ENCODE measurements at regions of chr11 and their contacts with region 1.

Region 1: GRCh38 chr11:72179804-72180396 is 12.0 kb upstream of the FOLR1 start:
- DNase-seq: no peak
- H3K4me3 Mint-ChIP-seq: no peak overlapping the region
- H3K27ac Mint-ChIP-seq: peak overlapping the region; percentile 74
- H3K4me1 Mint-ChIP-seq: peaks cover 17% of the 10 kb centered on the region
- H3K27me3 Mint-ChIP-seq: peaks cover 9% of the 10 kb centered on the region

Region 2: DNA sequence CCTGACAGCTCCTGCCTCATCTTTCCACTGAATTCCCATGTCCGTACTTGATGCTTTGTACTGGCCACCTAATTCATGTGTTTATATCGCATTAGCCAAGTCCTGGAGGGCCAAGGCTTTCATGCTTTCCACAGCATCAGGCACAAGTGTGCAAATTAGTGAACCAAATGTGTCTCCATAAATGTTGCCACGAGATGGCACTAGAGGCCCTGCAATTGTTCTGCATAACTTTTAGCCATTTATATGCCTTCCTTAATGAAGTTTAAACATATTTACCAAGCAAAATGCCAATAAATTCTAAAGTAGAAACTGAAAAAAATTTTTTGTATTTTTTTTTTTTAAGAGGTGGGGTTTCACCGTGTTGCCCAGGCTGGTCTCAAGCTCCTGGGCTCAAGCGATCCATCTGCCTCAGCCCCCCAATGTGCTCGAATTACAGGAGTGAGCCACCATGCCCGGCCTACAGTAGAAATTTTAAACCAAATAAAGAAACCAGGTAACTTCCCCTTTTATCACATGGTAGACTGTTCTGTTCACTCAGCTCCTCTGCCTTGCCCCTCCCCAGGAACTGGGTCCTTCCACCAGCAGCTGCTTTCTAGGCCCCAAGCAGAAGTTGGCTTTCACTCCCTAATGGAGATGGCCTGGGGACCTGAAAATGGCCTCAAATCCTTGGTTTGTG is 202.0 kb before region 1 on chr11:
- intact Hi-C with region 1: loop called (anchors 5 kb)
- DNase-seq: peak; percentile 39
- H3K4me3 Mint-ChIP-seq: no peak overlapping the region
- H3K27ac Mint-ChIP-seq: no peak overlapping the region
- H3K4me1 Mint-ChIP-seq: peaks cover 2% of the 10 kb centered on the region
- H3K27me3 Mint-ChIP-seq: no peaks in the 10 kb centered on the region

Region 3: GRCh38 chr11:72030472-72031045 is 149.3 kb before region 1 on chr11:
- intact Hi-C with region 1: loop called (anchors 1 kb)
- DNase-seq: no peak
- H3K4me3 Mint-ChIP-seq: no peak overlapping the region
- H3K27ac Mint-ChIP-seq: no peak overlapping the region
- H3K4me1 Mint-ChIP-seq: peaks cover 10% of the 10 kb centered on the region
- H3K27me3 Mint-ChIP-seq: no peaks in the 10 kb centered on the region

Region 4: GRCh38 chr11:72112321-72113219 is 67.3 kb before region 1 on chr11 and contains the start of gene ANAPC15:
- intact Hi-C with region 1: loop called (anchors 1 kb)
- DNase-seq: peak; percentile 98
- H3K4me3 Mint-ChIP-seq: peak within 1 kb of the TSS; percentile 89
- H3K27ac Mint-ChIP-seq: peak within 1 kb of the TSS; percentile 98
- H3K4me1 Mint-ChIP-seq: peaks cover 16% of the 10 kb centered on the region
- H3K27me3 Mint-ChIP-seq: no peaks in the 10 kb centered on the region
- total RNA-seq, gene ANAPC15: 61.6 and 67.9 TPM in 2 replicates

Region 5: GRCh38 chr11:72293910-72294615 is 114.2 kb after region 1 on chr11:
- intact Hi-C with region 1: no loop called
- DNase-seq: no peak
- H3K4me3 Mint-ChIP-seq: no peak overlapping the region
- H3K27ac Mint-ChIP-seq: no peak overlapping the region
- H3K4me1 Mint-ChIP-seq: no peaks in the 10 kb centered on the region
- H3K27me3 Mint-ChIP-seq: no peaks in the 10 kb centered on the region

Region 6: GRCh38 chr11:72652873-72653630 is 473.2 kb after region 1 on chr11:
- intact Hi-C with region 1: no loop called
- DNase-seq: no peak
- H3K4me3 Mint-ChIP-seq: no peak overlapping the region
- H3K27ac Mint-ChIP-seq: no peak overlapping the region
- H3K4me1 Mint-ChIP-seq: no peaks in the 10 kb centered on the region
- H3K27me3 Mint-ChIP-seq: peaks cover 1% of the 10 kb centered on the region